Body of pancreas (tissue), 4 donors: ENCODE measurements at regions of chr1 and their contacts with region 1.

Region 1: GRCh38 chr1:178542560-178543356 is 29.8 kb downstream of the TEX35 start:
- DNase-seq: peak; percentile 84 to 91 (median 88)
- ATAC-seq: peak; percentile 88
- H3K4me3 ChIP-seq: peak overlapping the region; percentile 49 to 88
- H3K27ac ChIP-seq: peak overlapping the region; percentile 68 to 88 (median 80)
- H3K4me1 ChIP-seq: peaks cover 20% of the 10 kb centered on the region
- H3K27me3 ChIP-seq: no peaks in the 10 kb centered on the region
- CTCF ChIP-seq: peak; percentile 94 to 100 (median 98)
- POLR2A ChIP-seq: peak in 1 of 3 donors; percentile 1

Region 2: GRCh38 chr1:178749581-178750166 is 206.9 kb after region 1 on chr1:
- intact Hi-C with region 1: loop called (anchors 5 kb)
- DNase-seq: no peak
- ATAC-seq: no peak
- H3K4me3 ChIP-seq: no peak overlapping the region
- H3K27ac ChIP-seq: no peak overlapping the region
- H3K4me1 ChIP-seq: no peaks in the 10 kb centered on the region
- H3K27me3 ChIP-seq: no peaks in the 10 kb centered on the region
- CTCF ChIP-seq: no peak
- POLR2A ChIP-seq: no peak